MCF 10A (cell line): ENCODE measurements at regions of chr2 and their contacts with region 1.

Region 1: DNA sequence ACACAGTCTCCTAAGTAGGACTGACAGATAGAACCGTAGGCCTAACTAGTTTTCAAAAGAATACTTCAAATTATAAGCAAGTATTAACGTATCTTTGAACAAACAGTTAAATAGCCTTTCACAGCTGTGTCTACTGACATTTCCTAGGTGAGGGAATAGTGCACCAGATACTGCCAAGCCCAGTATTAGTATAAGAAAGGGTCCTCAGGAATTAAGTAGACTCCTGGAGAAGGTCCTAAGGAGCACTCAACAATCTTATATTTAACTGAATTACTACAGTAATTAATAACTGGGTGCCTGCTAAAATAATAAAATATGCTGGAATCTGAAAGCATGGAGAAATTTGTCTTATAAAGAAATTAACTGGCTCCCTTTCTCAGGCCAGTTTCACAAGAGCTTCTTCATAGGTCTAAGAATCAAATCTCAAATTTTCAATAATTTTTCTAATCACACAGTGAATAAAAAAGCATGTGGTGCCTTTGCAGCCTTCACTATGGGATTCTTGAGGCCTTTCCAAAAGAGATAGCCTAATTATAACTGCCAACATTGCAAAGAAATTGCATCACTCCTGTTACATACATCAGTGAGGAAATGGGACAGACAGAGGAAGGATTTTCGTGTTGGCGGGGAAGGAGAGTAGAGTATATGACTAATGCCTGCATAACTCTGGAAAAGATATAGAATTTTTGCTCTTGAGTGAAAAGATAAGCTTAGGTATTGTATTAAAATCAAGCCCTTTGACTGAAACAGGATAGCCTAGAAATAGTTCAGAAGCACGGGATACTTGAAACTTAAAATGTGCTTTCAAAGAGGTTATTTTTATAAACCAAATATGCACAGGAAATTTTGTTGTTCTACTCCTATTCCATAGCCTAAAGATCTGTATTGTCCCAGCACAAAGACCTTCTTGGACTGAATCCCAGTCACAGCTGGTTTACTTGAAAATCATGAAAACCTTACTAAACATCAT is 228.6 kb upstream of the STK17B start:
- DNase-seq: peak; percentile 93
- H3K4me3 Mint-ChIP-seq: no peak overlapping the region
- H3K27ac Mint-ChIP-seq: peak overlapping the region; percentile 71
- H3K4me1 Mint-ChIP-seq: peaks cover 23% of the 10 kb centered on the region
- H3K27me3 Mint-ChIP-seq: no peaks in the 10 kb centered on the region
- CTCF ChIP-seq: no peak

Region 2: GRCh38 chr2:196331143-196331542 is 68.9 kb before region 1 on chr2:
- CTCF ChIA-PET with region 1: no interaction called
- POLR2A ChIA-PET with region 1: no interaction called
- intact Hi-C with region 1: no loop called
- DNase-seq: peak; percentile 44
- H3K4me3 Mint-ChIP-seq: no peak overlapping the region
- H3K27ac Mint-ChIP-seq: no peak overlapping the region
- H3K4me1 Mint-ChIP-seq: peaks cover 9% of the 10 kb centered on the region
- H3K27me3 Mint-ChIP-seq: no peaks in the 10 kb centered on the region
- CTCF ChIP-seq: no peak

Region 3: DNA sequence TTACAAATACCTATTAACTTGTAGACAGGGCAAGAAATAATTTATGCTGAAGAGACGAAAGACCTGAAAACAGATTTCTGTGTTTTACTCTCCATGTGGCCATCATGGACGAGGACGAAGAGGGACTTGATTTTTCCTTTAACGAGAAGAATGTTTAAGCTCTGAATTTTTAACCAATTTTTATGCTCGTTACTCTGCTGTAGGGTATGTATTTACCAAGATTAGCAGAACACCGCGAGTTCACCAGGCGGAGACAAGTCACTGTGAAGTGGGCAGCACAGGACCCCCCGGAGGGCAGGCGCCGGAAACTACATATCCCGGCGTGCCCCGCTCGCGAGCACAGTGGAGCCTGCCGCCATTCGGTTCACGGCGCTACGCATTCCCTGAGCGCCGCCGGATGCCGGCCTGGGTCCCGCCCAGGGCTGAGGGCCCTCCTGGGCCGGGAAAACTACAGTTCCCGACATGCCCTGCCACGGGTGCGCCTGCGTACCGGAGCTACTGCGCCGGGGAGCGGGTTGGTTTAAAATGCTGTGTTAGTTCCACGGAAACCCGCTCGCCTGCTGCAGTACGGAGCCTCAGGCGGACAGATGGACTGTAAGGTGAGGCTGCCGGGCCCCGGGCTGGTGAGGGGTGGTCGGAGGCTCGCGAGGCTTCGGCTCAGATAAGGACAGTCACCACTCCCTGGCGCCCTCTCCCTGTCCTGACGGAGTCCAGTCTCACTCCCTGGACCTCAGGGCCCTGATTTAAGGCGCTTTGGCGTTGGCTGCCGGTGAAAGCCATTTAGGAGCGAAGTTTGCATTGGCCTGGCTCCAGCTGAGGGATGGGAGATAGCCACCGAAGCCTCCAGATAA is 239.4 kb after region 1 on chr2 and contains the start of gene CCDC150:
- CTCF ChIA-PET with region 1: no interaction called
- POLR2A ChIA-PET with region 1: no interaction called
- intact Hi-C with region 1: loop called (anchors 5 kb)
- DNase-seq: peak; percentile 94
- H3K4me3 Mint-ChIP-seq: peak within 1 kb of the TSS; percentile 94
- H3K27ac Mint-ChIP-seq: peak within 1 kb of the TSS; percentile 71
- H3K4me1 Mint-ChIP-seq: peaks cover 16% of the 10 kb centered on the region
- H3K27me3 Mint-ChIP-seq: no peaks in the 10 kb centered on the region
- CTCF ChIP-seq: no peak
- total RNA-seq, gene CCDC150: 5.5 and 8.1 TPM in 2 replicates

Region 4: GRCh38 chr2:196783431-196784094 is 383.6 kb after region 1 on chr2:
- CTCF ChIA-PET with region 1: no interaction called
- POLR2A ChIA-PET with region 1: no interaction called
- intact Hi-C with region 1: no loop called
- DNase-seq: peak; percentile 54
- H3K4me3 Mint-ChIP-seq: no peak overlapping the region
- H3K27ac Mint-ChIP-seq: peak overlapping the region; percentile 16
- H3K4me1 Mint-ChIP-seq: peaks cover 8% of the 10 kb centered on the region
- H3K27me3 Mint-ChIP-seq: no peaks in the 10 kb centered on the region
- CTCF ChIP-seq: no peak